ENCODE measurements at regions of chr11 and their contacts with region 1.

Region 1: GRCh38 chr11:57567515-57568329 is at the start of gene UBE2L6:
- DNase-seq: peak; percentile 76 to 87
- ATAC-seq: peak; percentile 87 to 93
- H3K4me3 ChIP-seq: peak within 1 kb of the TSS; percentile 72
- H3K27ac ChIP-seq: peak within 1 kb of the TSS; percentile 74 to 89
- H3K4me1 ChIP-seq: peaks cover 20% of the 10 kb centered on the region
- CTCF ChIP-seq: no peak
- EP300 ChIP-seq: no peak
- POLR2A ChIP-seq: peak; percentile 36
- RAD21 ChIP-seq: no peak
- polyA plus RNA-seq, gene UBE2L6: 14.8 and 17.9 TPM in 2 replicates

Region 2: GRCh38 chr11:57205041-57205671 is 362.6 kb before region 1 on chr11:
- CTCF ChIA-PET with region 1: no interaction called
- POLR2A ChIA-PET with region 1: no interaction called
- DNase-seq: peak in 1 of 2 experiments; percentile 20
- ATAC-seq: peak in 1 of 2 experiments; percentile 90; a peak in 4 of 6 replicates
- H3K4me3 ChIP-seq: no peak overlapping the region
- H3K27ac ChIP-seq: peak overlapping the region in 1 of 2 experiments; percentile 5; a peak in 3 of 6 replicates
- H3K4me1 ChIP-seq: no peaks in the 10 kb centered on the region
- CTCF ChIP-seq: no peak
- EP300 ChIP-seq: no peak
- POLR2A ChIP-seq: no peak
- RAD21 ChIP-seq: no peak

Region 3: GRCh38 chr11:57546869-57547475 is 20.8 kb before region 1 on chr11:
- CTCF ChIA-PET with region 1: interaction called, 25 read pairs
- POLR2A ChIA-PET with region 1: no interaction called
- DNase-seq: peak; percentile 50 to 59
- ATAC-seq: peak; percentile 84 to 88
- H3K4me3 ChIP-seq: no peak overlapping the region
- H3K27ac ChIP-seq: no peak overlapping the region
- H3K4me1 ChIP-seq: no peaks in the 10 kb centered on the region
- CTCF ChIP-seq: no peak
- EP300 ChIP-seq: no peak
- POLR2A ChIP-seq: no peak
- RAD21 ChIP-seq: no peak

Region 4: DNA sequence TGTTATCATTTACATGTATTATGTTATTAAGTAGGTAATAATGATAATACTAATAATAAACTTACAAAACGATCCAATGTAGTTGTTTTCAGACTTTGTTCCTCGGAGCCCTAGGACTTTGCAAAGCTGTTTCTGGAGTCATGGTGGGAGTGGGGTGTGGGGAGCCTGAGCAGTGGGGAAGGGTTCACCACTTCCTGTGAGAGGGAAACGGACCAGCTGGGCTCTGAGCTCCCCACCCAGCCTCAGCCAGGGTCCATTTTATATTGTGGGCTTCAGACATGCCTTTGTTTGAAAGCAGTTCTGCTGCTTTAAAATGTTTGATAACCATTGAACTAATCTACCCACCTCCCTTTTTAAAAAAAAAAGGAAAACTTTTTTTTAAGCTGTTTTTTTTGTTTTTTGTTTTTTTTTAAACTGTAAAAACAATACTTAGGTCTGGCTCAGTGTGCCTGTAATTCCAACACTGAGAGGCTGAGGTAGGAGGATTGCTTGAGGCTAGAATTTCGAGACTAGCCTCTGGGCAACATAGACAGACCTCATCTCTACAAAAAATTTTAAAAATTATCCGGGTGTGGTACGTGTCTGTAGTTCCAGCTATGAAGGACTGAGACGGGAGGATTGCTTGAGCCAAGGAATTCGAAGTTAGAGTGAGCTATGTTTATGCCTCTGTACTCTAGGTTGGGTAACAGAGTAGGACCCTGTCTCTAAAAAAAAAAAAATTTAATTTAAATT is 36.7 kb after region 1 on chr11:
- CTCF ChIA-PET with region 1: interaction called, 14 read pairs
- POLR2A ChIA-PET with region 1: no interaction called
- DNase-seq: no peak
- ATAC-seq: no peak
- H3K4me3 ChIP-seq: no peak overlapping the region
- H3K27ac ChIP-seq: no peak overlapping the region
- H3K4me1 ChIP-seq: no peaks in the 10 kb centered on the region
- CTCF ChIP-seq: no peak
- EP300 ChIP-seq: no peak
- POLR2A ChIP-seq: no peak
- RAD21 ChIP-seq: no peak

Region 5: DNA sequence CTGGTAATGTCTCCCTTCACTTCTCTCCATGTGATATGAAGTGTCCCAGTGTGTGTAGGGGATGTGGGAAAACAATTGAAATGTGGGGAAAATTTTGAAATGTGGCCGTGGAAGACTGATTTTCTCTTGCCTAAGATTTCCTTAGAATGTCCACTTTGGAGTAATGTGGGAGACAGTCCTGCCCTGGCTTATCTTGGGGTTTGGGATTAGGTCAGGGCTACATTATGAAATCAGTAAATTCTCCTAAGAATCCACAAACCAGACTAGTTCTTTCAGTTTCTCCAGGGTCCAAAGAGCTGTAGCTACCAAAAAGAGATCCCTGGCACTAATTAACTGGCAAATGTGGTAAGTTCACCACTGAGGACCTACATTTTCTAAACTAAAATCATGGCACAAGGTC is 59.2 kb after region 1 on chr11:
- CTCF ChIA-PET with region 1: interaction called, 15 read pairs
- POLR2A ChIA-PET with region 1: no interaction called
- DNase-seq: no peak
- ATAC-seq: no peak
- H3K4me3 ChIP-seq: no peak overlapping the region
- H3K27ac ChIP-seq: no peak overlapping the region
- H3K4me1 ChIP-seq: no peaks in the 10 kb centered on the region
- CTCF ChIP-seq: no peak
- EP300 ChIP-seq: no peak
- POLR2A ChIP-seq: no peak
- RAD21 ChIP-seq: no peak

Region 6: DNA sequence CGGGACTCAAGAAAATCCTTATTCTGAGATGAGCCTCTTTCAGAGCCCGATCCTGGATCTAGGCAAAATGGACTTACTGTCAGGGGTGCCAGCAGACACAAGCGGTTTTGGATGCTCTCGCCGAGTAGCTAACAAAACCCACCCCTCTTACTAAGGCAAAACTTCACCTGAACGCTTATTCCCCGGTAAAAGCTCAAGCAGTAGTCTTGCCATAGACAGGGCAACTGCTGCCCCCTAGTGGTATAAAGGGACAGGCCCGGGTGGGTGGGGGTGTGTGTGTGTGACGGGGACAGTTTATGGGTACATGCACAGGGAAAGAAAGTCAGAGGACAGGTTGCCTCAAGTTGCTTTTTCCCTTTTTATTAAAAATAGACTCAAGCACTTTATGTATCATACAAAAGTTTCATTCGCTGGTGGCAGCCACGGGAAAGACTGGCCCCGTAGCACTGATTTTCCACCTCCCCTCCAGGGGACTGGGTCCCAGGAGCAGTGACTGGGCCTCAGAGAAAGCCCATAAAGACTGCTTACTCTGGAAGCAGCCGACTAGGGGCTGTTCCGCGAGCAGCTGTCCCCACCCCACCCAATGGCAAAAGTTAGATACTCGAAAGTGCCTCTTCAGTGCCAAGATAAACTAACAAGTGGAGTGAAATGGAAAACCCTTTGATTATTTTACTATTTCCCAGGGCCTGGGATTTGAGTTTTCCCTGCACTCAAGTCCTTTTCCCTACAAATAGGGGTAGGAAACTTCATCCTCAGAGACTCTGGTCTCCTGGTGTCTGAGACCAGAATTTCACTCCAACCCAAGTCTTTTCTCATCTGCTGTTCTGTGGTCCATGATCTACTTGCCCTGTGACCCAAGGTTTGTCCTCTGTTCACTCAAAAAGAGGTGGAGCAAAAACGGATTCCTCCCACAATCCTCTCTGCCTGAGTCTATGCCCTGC is 77.3 kb after region 1 on chr11:
- CTCF ChIA-PET with region 1: interaction called, 318 read pairs
- POLR2A ChIA-PET with region 1: interaction called, 16 read pairs
- DNase-seq: peak; percentile 76 to 85
- ATAC-seq: peak; percentile 60 to 76; a peak in 5 of 6 replicates
- H3K4me3 ChIP-seq: no peak overlapping the region
- H3K27ac ChIP-seq: no peak overlapping the region
- H3K4me1 ChIP-seq: peaks cover 32% of the 10 kb centered on the region
- CTCF ChIP-seq: peak; percentile 88
- EP300 ChIP-seq: no peak
- POLR2A ChIP-seq: no peak
- RAD21 ChIP-seq: peak; percentile 74 to 76

Region 7: DNA sequence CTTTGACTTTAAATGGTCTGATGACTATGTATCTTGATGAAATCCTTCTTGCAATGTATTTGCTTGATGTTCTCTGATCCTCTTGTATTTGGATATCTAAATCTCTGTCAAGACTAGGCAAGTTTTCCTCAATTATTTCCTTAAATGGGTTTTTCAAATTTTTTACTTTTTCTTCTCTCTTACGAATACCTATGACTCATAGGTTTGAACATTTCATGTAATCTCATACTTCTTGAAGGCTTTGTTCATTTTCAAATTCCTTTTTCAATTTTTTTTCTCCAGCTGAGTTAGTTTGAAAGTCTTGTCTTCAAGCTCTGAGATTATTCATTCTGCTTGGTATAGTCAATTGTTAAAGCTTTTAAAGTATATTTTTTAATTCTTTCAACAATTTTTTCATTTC is 687.2 kb after region 1 on chr11:
- CTCF ChIA-PET with region 1: no interaction called
- POLR2A ChIA-PET with region 1: no interaction called
- DNase-seq: no peak
- ATAC-seq: no peak
- H3K4me3 ChIP-seq: no peak overlapping the region
- H3K27ac ChIP-seq: no peak overlapping the region
- H3K4me1 ChIP-seq: no peaks in the 10 kb centered on the region
- CTCF ChIP-seq: no peak
- EP300 ChIP-seq: no peak
- POLR2A ChIP-seq: no peak
- RAD21 ChIP-seq: no peak

Measured in A549 (cell line).